ENCODE measurements at regions of chr2 and their contacts with region 1.

Region 1: DNA sequence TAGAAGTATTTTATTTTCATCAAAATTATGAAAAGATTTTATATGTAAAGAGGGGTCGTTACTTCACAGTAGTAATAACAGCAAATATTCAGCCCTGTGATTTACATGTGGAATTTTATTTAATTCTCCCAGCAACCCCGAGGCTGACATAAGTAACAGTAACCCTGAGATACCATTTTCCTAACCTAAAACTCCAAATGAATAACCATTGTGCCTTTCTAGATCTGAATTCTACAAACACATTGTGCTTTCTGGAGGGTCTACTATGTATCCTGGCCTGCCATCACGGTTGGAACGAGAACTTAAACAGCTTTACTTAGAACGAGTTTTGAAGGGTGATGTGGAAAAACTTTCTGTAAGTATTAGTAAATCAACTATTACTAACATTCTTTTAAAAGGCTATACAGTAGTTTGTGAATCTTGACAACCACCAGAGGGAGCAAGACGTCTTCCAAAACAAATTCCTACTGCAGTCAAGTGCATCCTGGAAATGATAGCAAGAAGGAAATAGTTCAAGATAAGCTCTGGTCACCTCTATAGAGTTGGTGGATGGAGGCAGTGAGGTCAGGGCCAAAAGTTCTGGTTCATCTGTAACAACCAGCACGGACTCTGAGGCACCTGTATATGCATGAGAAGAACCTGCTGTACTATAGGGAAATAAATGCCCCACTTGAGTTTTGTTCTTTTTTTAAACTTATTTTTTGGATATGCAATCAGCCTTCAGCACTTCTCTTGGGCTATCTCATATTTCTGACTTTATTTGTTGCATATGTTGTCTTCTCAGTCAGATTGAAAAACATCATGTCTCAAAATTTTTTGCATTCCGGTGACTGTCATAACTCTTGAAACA is 37.4 kb downstream of the ACTR2 start:
- DNase-seq: peak in 3 of 10 donors; percentile 9 to 50 (median 37)
- H3K4me3 ChIP-seq: no peak overlapping the region
- H3K27ac ChIP-seq: no peak overlapping the region
- H3K27me3 ChIP-seq: no peaks in the 10 kb centered on the region
- CTCF ChIP-seq: peak; percentile 63 to 92 (median 82)

Region 2: GRCh38 chr2:65554765-65555591 is 289.9 kb after region 1 on chr2:
- intact Hi-C with region 1: loop called (anchors 2 to 5 kb)
- DNase-seq: no peak
- H3K4me3 ChIP-seq: no peak overlapping the region
- H3K27ac ChIP-seq: no peak overlapping the region
- H3K27me3 ChIP-seq: no peaks in the 10 kb centered on the region
- CTCF ChIP-seq: no peak